Activated B cell treated with CpG ODN at 0.5 μM for 24 hours (primary cell): ENCODE measurements at regions of chr1 and their contacts with region 1.

Region 1: DNA sequence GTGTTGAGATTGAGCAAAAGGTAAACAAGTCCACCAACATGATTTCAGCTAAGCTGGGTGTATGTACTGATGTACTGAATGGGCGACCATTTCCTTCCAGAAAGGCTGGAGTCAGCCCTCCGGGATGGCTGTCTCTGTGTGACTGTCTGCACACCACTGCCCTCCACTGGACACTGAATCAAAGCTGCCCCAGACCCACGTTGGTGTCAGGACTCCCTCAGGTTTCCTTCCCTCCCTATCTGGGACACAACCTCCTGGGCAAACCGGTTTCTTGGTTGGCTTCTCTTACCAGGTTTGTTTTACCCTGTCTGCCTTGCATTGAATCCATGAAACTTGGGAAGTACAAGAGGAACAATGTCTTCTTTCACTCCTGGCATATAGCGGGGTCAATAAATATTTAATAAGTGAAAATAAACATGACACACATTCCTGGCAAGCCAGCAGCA is 5.3 kb upstream of the SRP9 start:
- DNase-seq: no peak
- ATAC-seq: peak; percentile 59
- H3K4me3 Mint-ChIP-seq: no peak overlapping the region
- H3K27ac Mint-ChIP-seq: no peak overlapping the region
- H3K4me1 Mint-ChIP-seq: peaks cover 7% of the 10 kb centered on the region
- H3K27me3 Mint-ChIP-seq: no peaks in the 10 kb centered on the region
- CTCF ChIP-seq: no peak

Region 2: DNA sequence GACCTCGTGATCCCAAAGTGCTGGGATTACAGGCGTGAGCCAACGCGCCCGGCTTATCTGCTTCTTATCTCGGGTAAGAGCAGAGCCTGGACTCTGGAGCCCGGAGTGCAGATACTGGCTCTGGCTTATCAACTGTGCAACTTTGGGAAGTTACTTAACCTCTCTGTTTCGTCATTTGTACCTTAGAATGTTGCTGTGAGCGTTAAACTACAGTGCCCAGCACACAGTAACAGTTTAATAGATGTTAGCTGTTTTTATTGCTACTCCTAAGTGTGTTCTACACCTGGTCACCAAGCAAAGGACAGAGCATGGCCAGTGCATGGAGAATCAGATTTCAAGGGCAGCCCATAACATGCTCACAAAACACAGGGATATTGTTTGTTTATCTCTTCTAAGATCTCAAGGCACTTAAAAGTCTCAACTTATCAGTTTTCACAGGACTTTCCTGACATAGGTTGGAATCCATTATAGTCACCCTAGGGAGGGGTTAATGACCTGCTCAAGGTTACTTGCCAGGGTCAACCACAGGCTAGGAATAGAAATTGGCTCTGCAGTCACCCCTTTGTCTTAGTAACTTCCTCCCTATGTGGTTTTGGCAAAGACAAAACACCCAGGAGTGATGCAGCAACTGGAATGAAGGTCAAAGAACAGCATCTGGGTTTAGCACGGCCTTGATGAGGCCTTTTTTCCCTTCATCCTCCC is 17.3 kb before region 1 on chr1:
- CTCF ChIA-PET with region 1: no interaction called
- POLR2A ChIA-PET with region 1: no interaction called
- intact Hi-C with region 1: no loop called
- DNase-seq: no peak
- ATAC-seq: no peak
- H3K4me3 Mint-ChIP-seq: no peak overlapping the region
- H3K27ac Mint-ChIP-seq: no peak overlapping the region
- H3K4me1 Mint-ChIP-seq: no peaks in the 10 kb centered on the region
- H3K27me3 Mint-ChIP-seq: no peaks in the 10 kb centered on the region
- CTCF ChIP-seq: no peak

Region 3: DNA sequence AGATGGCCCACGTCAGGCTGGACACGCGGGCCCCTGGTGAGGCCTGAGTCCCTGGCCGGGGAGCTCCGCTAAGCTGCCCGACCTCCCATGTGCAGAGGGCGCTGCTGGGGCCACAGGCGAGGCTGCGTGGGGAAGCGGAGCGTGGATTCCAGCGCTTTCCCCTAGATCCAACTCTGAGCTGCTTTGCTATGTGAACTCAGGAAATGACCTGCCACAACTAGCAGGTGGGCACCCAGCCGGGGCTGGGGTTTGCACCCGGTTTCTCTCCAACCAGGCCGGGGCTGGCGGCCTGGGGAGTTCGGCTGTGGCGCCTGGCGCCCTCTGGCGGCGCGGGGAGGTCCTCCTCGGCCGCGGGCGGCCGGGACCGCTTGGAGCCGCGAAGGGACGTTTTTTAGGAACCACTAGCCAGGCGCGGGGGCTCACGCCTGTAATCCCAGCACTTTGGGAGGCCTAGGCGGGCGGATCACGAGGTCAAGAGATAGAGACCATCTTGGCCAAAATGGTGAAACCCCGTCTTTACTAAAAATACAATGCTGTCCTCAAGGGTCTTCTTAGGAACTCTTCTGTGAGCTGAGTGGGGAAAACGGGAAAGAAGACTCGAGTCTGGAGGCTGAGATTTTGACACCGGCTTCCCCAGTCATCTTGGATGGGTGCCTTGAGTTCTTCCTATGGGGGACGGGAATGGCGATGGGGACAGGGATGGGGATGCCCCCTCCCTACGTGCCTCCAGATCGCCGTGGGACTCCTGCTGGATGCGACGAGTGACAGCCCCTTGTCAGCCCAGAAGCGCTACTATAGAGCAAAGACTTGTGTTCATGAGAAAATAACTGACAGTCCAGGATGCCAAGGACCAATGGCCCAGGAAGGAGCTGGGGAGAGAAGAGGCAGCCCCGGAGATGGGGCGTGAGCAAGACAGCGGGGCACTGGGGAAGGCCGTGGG is 139.1 kb after region 1 on chr1:
- CTCF ChIA-PET with region 1: interaction called, 13 read pairs
- POLR2A ChIA-PET with region 1: interaction called, 12 read pairs
- intact Hi-C with region 1: loop called (anchors 1 kb)
- DNase-seq: peak; percentile 66
- ATAC-seq: peak; percentile 90
- H3K4me3 Mint-ChIP-seq: no peak overlapping the region
- H3K27ac Mint-ChIP-seq: no peak overlapping the region
- H3K4me1 Mint-ChIP-seq: peaks cover 23% of the 10 kb centered on the region
- H3K27me3 Mint-ChIP-seq: no peaks in the 10 kb centered on the region
- CTCF ChIP-seq: peak; percentile 40